Activated T-helper 1 cell treated with anti-CD3 and anti-CD28 coated beads, Interleukin-12 subunit alpha, Interleukin-12 subunit beta, Interleukin-2, Interleukin-4 antibody, amounts not matched to agents 30 ng/mL and 10 ng/mL and 1 ng/mL, durations not matched to agents 14 hours and 24 hours and 36 hours (primary cell): ENCODE measurements at regions of chr7 and their contacts with region 1.

Region 1: DNA sequence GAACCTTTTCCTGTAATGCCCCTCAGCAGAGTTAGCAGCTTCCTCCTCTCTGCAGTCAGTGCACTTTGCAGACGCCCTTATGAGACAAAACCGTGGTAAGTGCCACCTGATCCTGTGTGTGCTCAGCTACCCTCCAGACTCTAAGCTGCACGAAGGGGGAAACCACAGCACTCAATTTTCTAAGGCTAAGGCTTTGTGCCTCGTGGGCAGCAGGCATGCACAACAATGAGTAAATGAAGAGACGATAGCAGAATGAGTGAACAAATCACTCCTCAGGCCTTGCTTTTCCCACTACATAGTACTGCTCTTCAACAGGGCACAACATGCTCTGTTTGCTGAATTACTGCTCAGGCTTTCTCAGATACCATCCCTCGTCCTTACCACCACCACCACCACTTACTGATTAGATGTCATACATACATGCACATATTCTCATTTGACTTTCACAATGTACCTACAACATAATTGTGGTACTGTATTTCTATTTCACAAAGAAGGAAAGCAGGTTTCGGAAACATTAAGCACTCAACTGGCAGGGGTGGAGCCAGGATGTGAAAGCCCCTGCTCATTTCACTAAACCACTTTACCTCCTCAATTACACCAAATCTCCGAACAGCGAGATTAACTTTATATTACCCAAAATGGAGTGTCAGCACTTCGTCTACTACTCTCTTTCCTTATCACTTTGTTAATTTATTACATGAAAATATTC is 85.4 kb downstream of the ICA1 start:
- DNase-seq: peak; percentile 60
- H3K4me3 Mint-ChIP-seq: peak overlapping the region; percentile 76
- H3K27ac Mint-ChIP-seq: peak overlapping the region; percentile 99
- H3K4me1 Mint-ChIP-seq: peaks cover 53% of the 10 kb centered on the region
- H3K27me3 Mint-ChIP-seq: peaks cover 2% of the 10 kb centered on the region

Region 2: GRCh38 chr7:7851381-7851780 is 325.1 kb before region 1 on chr7:
- intact Hi-C with region 1: loop called (anchors 1 kb)
- DNase-seq: no peak
- H3K4me3 Mint-ChIP-seq: no peak overlapping the region
- H3K27ac Mint-ChIP-seq: no peak overlapping the region
- H3K4me1 Mint-ChIP-seq: peaks cover 30% of the 10 kb centered on the region
- H3K27me3 Mint-ChIP-seq: no peaks in the 10 kb centered on the region

Region 3: DNA sequence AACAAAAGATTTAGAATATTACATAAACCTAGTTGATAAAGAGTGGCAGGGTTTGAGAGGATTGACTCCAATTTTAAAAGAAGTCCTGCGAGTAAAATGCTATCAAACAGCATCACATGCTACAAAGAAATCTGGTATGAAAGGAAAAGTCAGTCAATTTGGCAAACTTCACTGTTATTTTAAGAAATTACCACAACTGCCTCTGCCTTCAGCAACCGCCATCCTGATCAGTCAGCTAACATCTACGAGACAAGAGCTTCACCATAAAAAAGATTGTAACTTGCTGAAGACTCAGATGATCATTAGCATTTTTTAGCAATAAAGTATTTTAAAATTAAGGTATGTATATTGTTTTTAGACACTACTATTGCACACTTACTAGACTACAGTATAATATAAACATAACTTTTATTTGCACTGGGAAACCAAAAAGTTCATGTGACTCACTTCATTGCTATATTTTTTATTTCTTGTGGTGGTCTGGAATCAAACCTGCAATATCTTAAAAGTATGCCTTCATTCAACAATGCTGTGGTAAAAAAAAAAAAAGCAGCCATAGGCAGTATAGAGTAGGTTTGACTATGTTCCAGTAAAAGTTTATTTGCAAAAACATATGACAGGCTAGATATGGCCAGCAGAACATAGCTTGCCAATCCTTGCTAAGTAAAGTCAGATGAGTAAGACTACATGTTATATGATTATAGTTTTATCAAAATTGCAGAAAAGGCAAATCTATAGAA is 133.6 kb before region 1 on chr7:
- intact Hi-C with region 1: loop called (anchors 2 kb)
- DNase-seq: no peak
- H3K4me3 Mint-ChIP-seq: no peak overlapping the region
- H3K27ac Mint-ChIP-seq: peak overlapping the region; percentile 61
- H3K4me1 Mint-ChIP-seq: peaks cover 74% of the 10 kb centered on the region
- H3K27me3 Mint-ChIP-seq: no peaks in the 10 kb centered on the region

Region 4: GRCh38 chr7:8056431-8056830 is 120.1 kb before region 1 on chr7:
- intact Hi-C with region 1: no loop called
- DNase-seq: no peak
- H3K4me3 Mint-ChIP-seq: no peak overlapping the region
- H3K27ac Mint-ChIP-seq: no peak overlapping the region
- H3K4me1 Mint-ChIP-seq: peaks cover 11% of the 10 kb centered on the region
- H3K27me3 Mint-ChIP-seq: no peaks in the 10 kb centered on the region

Region 5: DNA sequence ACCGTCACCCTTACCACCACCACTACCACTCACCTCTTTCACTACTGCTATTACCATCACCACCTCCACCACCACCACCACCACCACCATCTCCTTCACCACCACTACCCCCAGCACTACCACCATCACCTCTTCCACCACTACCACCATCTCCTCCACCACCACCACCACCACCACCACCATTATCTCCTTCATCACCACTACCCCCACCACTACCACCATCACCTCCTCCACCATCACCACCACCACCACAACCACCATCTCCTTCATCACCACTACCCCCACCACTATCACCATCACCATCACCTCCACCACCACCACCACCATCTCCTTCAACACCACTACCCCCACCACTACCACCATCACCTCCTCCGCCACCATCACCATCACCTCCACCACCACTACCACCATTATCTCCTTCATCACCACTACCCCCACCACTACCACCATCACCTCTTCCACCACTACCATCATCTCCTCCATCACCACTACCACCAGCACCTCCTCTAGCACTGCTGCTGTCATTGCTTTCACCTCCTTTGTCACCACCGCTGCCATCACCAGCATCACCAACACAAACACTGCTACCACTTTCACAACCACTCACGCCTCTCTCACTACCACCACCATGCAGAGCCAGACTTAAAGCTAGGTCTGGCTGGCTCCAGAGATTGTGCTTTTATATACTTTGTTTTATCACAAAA is 23.9 kb before region 1 on chr7:
- intact Hi-C with region 1: loop called (anchors 2 kb)
- DNase-seq: no peak
- H3K4me3 Mint-ChIP-seq: no peak overlapping the region
- H3K27ac Mint-ChIP-seq: peak overlapping the region; percentile 63
- H3K4me1 Mint-ChIP-seq: peaks cover 17% of the 10 kb centered on the region
- H3K27me3 Mint-ChIP-seq: no peaks in the 10 kb centered on the region

Region 6: GRCh38 chr7:8249121-8249520 is 72.6 kb after region 1 on chr7:
- intact Hi-C with region 1: no loop called
- DNase-seq: no peak
- H3K4me3 Mint-ChIP-seq: no peak overlapping the region
- H3K27ac Mint-ChIP-seq: no peak overlapping the region
- H3K4me1 Mint-ChIP-seq: no peaks in the 10 kb centered on the region
- H3K27me3 Mint-ChIP-seq: peaks cover 3% of the 10 kb centered on the region